AG04450 (cell line): ENCODE measurements at regions of chr16 and their contacts with region 1.

Region 1: GRCh38 chr16:53690771-53691170 is 12.9 kb downstream of the RPGRIP1L start:
- DNase-seq: no peak
- H3K4me3 ChIP-seq: no peak overlapping the region
- H3K27ac ChIP-seq: no peak overlapping the region
- H3K27me3 ChIP-seq: no peaks in the 10 kb centered on the region
- CTCF ChIP-seq: no peak

Region 2: DNA sequence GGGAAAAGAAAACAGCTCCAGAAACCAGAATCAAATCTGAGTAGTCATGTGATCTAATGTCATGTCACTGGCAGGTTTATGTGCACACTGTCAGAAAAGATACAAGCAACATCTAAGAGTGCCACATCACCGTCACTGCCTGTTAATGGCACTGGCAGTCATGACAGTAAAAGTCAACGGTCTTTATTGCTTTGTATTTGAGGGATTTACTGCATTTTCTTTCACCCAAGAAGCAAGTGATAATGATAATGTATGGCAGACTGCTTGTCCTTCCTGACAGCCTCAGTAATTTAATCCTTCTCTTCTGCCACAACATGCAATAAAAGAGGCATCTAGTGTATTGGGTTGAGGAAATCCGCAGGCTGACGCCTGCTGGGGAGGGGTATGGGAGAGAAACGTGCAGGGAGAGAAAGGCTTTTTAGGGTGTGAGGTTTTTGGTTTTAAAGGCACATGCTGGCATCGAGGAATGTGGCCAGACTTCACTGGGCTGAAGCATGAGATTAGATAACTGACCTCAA is 79.5 kb before region 1 on chr16:
- CTCF ChIA-PET with region 1: no interaction called
- POLR2A ChIA-PET with region 1: no interaction called
- DNase-seq: no peak
- H3K4me3 ChIP-seq: no peak overlapping the region
- H3K27ac ChIP-seq: no peak overlapping the region
- H3K27me3 ChIP-seq: no peaks in the 10 kb centered on the region
- CTCF ChIP-seq: no peak

Region 3: DNA sequence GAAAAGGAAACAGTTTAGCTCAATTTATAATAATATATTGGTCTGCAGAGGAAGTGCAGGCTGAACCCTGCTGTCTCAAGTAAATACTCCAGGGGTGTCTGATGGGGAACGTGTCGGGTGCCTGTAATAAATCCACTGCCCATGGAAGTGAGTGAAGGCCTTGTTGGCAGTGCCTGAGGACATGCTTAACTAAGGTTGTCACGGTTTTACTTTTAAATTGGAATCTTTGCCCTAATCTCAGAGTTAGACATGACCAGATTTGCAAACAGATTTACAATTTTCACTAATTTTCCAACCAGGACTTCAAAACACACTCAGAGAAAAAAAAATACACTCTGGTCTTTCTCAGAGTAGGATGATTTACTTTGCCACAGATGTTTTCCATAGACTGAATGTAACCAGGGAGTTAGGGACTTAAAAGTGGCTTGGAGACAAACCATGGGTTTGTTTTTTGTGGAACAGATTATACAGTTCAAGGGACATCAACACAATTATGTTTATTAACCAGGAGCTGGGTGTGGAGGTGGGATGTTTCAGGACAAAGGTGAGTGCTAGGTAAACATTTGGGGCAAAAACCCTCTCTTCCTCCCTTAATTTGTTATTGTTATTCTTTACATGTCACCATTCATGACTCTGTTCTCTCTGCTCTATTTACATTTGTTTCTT is 157.6 kb after region 1 on chr16:
- CTCF ChIA-PET with region 1: interaction called, 10 read pairs
- POLR2A ChIA-PET with region 1: no interaction called
- DNase-seq: no peak
- H3K4me3 ChIP-seq: no peak overlapping the region
- H3K27ac ChIP-seq: no peak overlapping the region
- H3K27me3 ChIP-seq: no peaks in the 10 kb centered on the region
- CTCF ChIP-seq: no peak

Region 4: GRCh38 chr16:53898997-53899396 is 208.2 kb after region 1 on chr16:
- CTCF ChIA-PET with region 1: no interaction called
- POLR2A ChIA-PET with region 1: no interaction called
- DNase-seq: no peak
- H3K4me3 ChIP-seq: no peak overlapping the region
- H3K27ac ChIP-seq: no peak overlapping the region
- H3K27me3 ChIP-seq: no peaks in the 10 kb centered on the region
- CTCF ChIP-seq: no peak